ENCODE measurements at regions of chr1 and their contacts with region 1.

Region 1: DNA sequence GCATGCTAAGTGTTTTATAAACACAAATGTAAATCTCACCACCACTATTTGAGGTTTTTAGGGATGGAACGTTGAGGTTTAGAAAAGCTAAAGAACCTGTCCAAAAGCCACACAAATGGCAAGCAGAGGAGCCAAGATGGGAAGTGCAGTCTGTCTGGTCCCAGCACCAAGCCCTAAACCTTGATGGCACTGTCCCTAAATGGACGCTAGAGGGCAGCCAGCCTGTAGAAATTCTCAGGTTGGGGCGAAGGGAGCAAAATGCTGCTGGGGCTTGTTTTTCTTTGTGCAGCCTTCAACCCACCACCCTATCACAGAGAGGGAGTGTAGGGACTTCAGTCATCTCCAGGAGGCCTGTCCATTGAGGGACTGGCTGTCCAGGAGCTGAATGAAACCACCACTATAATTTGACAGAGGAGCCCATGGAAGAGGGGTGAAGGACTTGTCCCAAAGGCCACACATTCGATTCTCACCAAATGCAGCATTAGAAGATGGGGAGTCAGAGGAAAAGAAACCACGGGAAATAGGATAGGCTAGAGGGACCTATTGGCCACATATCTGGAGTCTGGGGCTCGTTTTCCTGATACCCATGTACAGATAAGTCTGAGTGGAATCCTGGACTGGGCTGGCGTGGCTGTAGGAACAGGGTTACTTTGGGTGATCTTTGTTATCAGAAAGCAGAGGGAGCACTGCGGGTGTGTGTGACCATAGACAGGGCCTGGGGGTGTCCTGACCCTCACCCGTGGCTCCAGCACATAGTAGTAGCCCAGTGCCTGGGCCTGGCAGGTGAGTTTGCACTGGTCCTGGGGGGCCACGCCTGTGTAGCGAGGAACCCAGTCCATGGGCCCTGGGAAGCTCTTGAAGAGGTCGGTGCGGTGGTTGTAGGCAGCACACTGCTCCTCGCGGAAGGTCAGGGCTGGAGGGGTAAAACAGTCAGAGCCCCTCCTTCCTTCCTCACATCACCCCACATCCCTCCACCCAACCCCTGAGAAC is 6.1 kb downstream of the ADAMTS4 start:
- DNase-seq: no peak
- ATAC-seq: peak; percentile 93
- H3K4me3 Mint-ChIP-seq: no peak overlapping the region
- H3K27ac Mint-ChIP-seq: peak overlapping the region; percentile 68
- H3K4me1 Mint-ChIP-seq: peaks cover 52% of the 10 kb centered on the region
- H3K27me3 Mint-ChIP-seq: no peaks in the 10 kb centered on the region
- CTCF ChIP-seq: peak; percentile 56

Region 2: GRCh38 chr1:161159087-161159912 is 33.5 kb before region 1 on chr1 and contains the start of gene USP21:
- CTCF ChIA-PET with region 1: interaction called, 40 read pairs
- POLR2A ChIA-PET with region 1: no interaction called
- intact Hi-C with region 1: loop called (anchors 1 kb)
- DNase-seq: peak; percentile 93
- ATAC-seq: peak; percentile 95
- H3K4me3 Mint-ChIP-seq: peak within 1 kb of the TSS; percentile 93
- H3K27ac Mint-ChIP-seq: peak within 1 kb of the TSS; percentile 91
- H3K4me1 Mint-ChIP-seq: peaks cover 48% of the 10 kb centered on the region
- H3K27me3 Mint-ChIP-seq: no peaks in the 10 kb centered on the region
- CTCF ChIP-seq: no peak
- total RNA-seq, gene USP21: 31.9 and 38.1 TPM in 2 replicates

Region 3: DNA sequence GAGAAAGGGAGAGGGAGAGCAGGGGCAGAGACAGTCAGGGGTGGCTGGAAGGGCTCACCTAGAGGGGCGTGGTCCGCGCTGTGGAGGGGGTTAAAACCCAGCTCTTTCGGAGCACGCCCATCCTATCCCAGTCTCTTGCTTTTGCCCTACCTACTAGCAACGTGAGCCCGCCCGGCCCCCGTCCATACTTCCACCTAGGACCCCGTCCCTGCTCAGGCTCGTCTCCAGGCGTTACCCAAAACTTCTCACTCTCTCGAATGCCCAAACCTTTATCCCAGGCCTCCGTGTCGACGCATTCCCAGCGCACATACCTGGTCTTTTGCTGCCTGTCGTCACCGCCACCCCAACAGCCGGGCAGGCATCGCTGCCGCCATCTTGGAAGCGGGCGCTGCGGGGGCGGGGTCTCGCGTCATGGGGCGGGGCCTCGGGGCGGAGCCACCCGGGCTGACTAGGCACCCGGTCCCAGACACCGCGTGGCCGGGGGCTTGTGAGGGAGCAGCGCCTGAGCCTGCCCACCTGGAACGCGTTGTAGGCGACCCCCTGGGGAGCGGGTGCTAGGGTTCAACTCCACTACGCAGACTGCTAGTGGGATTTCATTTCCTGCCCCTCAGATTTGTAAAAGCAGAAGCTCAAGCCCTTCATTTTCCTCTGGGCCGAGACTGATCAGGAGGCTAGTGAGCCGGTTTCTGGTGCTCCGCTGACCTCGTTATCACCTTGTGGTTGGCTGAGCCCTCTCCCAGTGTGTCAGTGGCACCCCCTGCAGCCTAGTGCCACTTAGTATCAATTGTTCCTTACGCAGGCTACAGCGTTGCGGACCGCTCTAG is 15.4 kb before region 1 on chr1 and contains the start of gene B4GALT3:
- CTCF ChIA-PET with region 1: interaction called, 27 read pairs
- POLR2A ChIA-PET with region 1: interaction called, 12 read pairs
- intact Hi-C with region 1: loop called (anchors 1 kb)
- DNase-seq: peak; percentile 99
- ATAC-seq: peak; percentile 90
- H3K4me3 Mint-ChIP-seq: peak within 1 kb of the TSS; percentile 99
- H3K27ac Mint-ChIP-seq: peak within 1 kb of the TSS; percentile 99
- H3K4me1 Mint-ChIP-seq: peaks cover 64% of the 10 kb centered on the region
- H3K27me3 Mint-ChIP-seq: no peaks in the 10 kb centered on the region
- CTCF ChIP-seq: no peak
- total RNA-seq, gene B4GALT3: 40.7 and 41.7 TPM in 2 replicates

Region 4: GRCh38 chr1:161292631-161293030 is 99.9 kb after region 1 on chr1:
- CTCF ChIA-PET with region 1: interaction called, 5 read pairs
- POLR2A ChIA-PET with region 1: no interaction called
- intact Hi-C with region 1: loop called (anchors 5 kb)
- DNase-seq: no peak
- ATAC-seq: no peak
- H3K4me3 Mint-ChIP-seq: no peak overlapping the region
- H3K27ac Mint-ChIP-seq: no peak overlapping the region
- H3K4me1 Mint-ChIP-seq: peaks cover 6% of the 10 kb centered on the region
- H3K27me3 Mint-ChIP-seq: no peaks in the 10 kb centered on the region
- CTCF ChIP-seq: no peak

Region 5: GRCh38 chr1:161359291-161359690 is 166.5 kb after region 1 on chr1:
- CTCF ChIA-PET with region 1: no interaction called
- POLR2A ChIA-PET with region 1: no interaction called
- intact Hi-C with region 1: no loop called
- DNase-seq: no peak
- ATAC-seq: no peak
- H3K4me3 Mint-ChIP-seq: no peak overlapping the region
- H3K27ac Mint-ChIP-seq: no peak overlapping the region
- H3K4me1 Mint-ChIP-seq: peaks cover 3% of the 10 kb centered on the region
- H3K27me3 Mint-ChIP-seq: no peaks in the 10 kb centered on the region
- CTCF ChIP-seq: no peak

Region 6: DNA sequence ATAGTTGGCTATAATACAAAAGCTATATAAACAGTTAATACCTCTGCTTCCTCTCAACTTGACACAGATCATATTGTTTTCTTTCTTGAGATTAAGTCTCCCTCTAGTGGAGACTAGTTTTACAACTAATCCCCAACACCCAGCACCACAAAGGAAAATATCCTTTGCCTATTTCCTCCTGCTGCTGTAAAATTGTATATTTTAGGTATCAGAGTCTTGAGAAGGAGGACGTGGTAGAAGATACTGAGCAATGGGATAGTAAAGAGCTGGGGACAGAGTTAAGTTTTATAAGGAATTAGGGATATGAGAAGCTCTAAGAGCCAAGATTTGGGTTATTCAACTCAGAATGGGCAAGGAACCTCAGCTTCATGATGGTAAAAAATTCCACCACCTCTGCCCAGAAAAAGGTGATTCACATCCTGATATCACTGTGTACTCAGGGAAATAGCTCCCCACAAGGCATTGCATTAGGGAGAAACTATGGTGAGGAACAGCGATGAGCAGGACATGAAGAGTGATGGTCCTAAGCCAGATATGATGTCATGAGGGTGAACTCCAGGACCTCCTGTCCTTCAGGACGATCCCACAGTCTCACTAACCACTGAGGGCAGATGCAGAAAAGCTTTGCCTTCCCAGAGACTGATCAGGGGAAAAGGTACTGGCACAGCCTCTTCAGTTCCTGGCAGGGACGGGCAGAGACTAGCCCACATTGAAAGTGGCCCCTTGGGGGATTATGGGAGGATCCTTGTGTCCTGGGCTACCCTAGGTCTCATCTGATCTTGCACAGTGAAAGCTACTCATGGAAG is 189.6 kb after region 1 on chr1:
- CTCF ChIA-PET with region 1: interaction called, 26 read pairs
- POLR2A ChIA-PET with region 1: no interaction called
- intact Hi-C with region 1: loop called (anchors 1 kb)
- DNase-seq: no peak
- ATAC-seq: peak; percentile 90
- H3K4me3 Mint-ChIP-seq: no peak overlapping the region
- H3K27ac Mint-ChIP-seq: no peak overlapping the region
- H3K4me1 Mint-ChIP-seq: peaks cover 7% of the 10 kb centered on the region
- H3K27me3 Mint-ChIP-seq: no peaks in the 10 kb centered on the region
- CTCF ChIP-seq: no peak

Measured in activated B cell treated with CpG ODN at 0.5 μM for 24 hours (primary cell).